Psoas muscle (tissue), 8 donors: ENCODE measurements at regions of chr12 and their contacts with region 1.

Region 1: DNA sequence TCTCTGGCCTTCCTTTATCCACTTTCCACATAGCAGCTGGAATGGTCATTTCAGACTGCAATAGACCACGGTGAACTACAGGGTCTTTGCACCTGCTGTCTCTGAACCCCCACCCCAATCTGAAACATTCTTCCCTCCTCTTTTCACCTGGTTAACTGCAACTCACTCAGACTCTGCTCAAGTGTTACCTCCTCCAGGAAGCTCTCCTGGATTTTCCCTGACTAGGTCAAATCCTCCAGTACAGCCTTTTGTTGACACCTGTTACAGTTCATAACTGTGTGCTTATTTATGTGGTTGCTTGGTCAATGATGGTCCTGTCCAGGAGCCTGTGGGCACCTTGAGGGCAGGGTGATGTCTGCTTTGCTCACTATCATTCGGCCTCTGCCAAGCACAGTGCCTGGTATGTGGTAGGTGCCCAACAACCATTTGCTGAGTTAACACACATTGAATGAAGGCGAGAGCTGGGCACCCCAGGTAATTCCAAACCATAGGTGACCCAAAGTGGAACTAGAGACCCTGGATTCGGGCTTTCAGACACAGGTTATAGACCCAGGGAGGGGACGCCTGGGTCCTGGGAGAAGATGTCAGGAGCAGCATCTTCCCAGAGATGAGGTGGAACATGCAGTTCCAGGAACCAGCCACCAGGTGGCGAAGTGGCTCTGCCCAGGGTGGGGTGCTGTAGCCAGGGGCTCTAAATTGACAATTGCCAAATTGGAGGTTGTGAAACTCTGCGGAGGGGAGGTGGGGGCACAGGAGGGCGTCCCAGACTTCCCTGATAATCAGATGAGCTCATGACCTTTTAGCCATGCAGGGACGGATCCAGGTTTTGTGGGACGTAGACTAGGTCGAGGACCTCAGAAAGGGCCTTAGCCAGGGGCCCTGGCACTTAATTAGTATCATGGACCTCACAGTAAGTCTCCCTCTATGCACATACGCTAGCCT is 28.1 kb downstream of the TRPV4 start:
- DNase-seq: peak; percentile 68 to 81
- ATAC-seq: peak; percentile 83 to 94 (median 88)
- H3K4me3 ChIP-seq: no peak overlapping the region
- H3K27ac ChIP-seq: no peak overlapping the region
- H3K4me1 ChIP-seq: no peaks in the 10 kb centered on the region
- H3K27me3 ChIP-seq: no peaks in the 10 kb centered on the region
- CTCF ChIP-seq: peak; percentile 98

Region 2: DNA sequence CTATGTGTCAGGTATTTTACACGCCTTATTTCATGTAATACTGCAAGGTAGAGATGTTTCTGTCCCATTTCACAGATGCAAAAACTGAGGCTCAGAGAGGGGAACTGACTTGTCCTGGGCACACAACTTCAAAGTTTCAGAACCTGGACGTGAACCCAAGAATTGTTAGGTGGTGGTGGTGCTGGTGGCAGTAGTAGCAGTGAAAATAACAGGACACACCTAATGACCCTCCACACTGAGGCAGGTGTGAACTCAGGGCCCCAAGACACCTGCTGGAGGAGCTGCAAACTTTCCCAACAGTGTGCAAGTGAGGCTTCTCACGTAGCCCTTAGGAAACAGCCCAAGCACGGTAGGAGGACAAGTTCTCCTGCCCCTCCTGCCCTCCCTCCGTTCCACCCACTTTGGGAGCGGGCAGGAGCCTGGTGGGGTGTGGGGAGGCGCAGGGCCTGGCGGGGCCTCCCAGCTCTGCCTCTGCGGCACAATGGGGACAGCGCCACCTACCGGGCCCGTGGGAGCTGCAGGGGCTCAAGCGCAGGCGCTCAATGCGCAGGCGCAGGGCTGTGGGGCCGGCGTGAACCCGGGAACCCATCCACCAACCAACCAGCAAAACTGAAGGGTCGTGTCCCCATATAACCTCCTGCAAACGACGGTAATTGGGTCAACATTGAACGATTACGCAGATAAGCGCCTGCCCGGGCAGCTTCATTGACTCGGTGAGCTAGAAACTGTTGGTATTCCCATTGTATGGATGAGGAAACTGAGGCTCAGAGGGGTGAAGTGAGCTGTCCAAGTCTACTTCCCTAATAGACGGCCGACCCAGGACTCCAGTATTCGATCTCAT is 40.1 kb after region 1 on chr12:
- intact Hi-C with region 1: loop called (anchors 1 to 2 kb)
- DNase-seq: peak; percentile 86 to 91
- ATAC-seq: peak; percentile 92 to 99 (median 95)
- H3K4me3 ChIP-seq: peak overlapping the region; percentile 30
- H3K27ac ChIP-seq: no peak overlapping the region
- H3K4me1 ChIP-seq: peaks cover 4% of the 10 kb centered on the region
- H3K27me3 ChIP-seq: no peaks in the 10 kb centered on the region
- CTCF ChIP-seq: peak; percentile 94

Region 3: DNA sequence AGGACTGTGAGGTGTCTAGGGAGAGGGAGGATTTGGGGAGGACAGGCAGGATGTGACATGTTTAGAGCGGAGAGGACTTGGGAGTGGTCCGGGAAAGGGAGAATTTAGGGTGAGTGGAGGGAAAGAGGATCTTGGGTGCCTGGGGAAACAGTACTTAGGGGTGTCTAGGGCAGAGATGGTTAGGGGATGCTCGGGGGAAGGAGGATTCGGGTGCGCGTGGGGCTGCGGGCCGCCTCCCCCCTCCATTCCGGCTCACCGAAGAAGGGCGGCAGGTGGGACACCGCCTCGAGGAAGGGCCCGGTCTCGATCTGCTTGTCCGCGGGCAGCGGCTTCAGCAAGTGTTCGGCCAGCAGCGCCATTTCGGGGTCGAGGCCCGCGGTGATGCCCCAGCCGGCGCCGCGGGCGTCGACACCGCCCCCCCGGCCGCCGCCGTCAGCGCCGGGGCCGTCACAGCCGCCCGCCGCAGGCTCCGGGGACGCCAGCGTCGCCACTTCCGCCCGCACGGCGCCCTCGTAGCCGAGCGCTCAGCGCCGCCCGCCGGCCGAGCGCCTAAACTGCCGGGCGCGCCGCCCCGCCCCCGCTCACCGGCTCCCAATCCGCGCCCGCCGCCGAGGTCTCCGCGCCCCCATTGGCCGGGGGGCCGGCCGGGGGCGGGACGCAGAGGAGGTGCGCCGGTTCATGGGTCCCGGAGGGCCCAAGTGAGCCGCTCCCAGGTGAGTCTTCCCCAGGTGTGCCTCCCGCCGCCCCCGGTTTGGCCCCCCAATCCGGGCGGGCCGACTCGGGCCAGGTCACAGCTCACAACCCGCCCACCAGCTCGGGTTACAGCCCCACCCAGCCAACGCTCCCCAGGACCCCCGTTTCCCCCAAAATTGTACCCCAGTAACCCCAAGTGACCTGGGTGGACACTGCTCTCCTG is 75.2 kb after region 1 on chr12 and contains the start of gene GLTP:
- intact Hi-C with region 1: loop called (anchors 1 kb)
- DNase-seq: peak; percentile 88 to 93
- ATAC-seq: peak; percentile 98 to 99 (median 98)
- H3K4me3 ChIP-seq: peak within 1 kb of the TSS; percentile 91
- H3K27ac ChIP-seq: peak within 1 kb of the TSS; percentile 78
- H3K4me1 ChIP-seq: peaks cover 19% of the 10 kb centered on the region
- H3K27me3 ChIP-seq: no peaks in the 10 kb centered on the region
- CTCF ChIP-seq: peak; percentile 75
- total RNA-seq, gene GLTP: 15.3 to 23.3 (median 16.9) TPM